Psoas muscle (tissue), 8 donors: ENCODE measurements at regions of chr1 and their contacts with region 1.

Region 1: GRCh38 chr1:20775700-20776099 is 11.4 kb downstream of the HP1BP3 start:
- DNase-seq: no peak
- ATAC-seq: no peak
- H3K4me3 ChIP-seq: no peak overlapping the region
- H3K27ac ChIP-seq: no peak overlapping the region
- H3K4me1 ChIP-seq: peaks cover 19% of the 10 kb centered on the region
- H3K27me3 ChIP-seq: no peaks in the 10 kb centered on the region
- CTCF ChIP-seq: no peak

Region 2: GRCh38 chr1:20660847-20661206 is 114.9 kb before region 1 on chr1:
- intact Hi-C with region 1: no loop called
- DNase-seq: peak in 1 of 2 donors; percentile 52
- ATAC-seq: no peak
- H3K4me3 ChIP-seq: peak overlapping the region; percentile 92
- H3K27ac ChIP-seq: peak overlapping the region; percentile 93
- H3K4me1 ChIP-seq: peaks cover 30% of the 10 kb centered on the region
- H3K27me3 ChIP-seq: no peaks in the 10 kb centered on the region
- CTCF ChIP-seq: no peak

Region 3: GRCh38 chr1:20742671-20743070 is 33.0 kb before region 1 on chr1:
- intact Hi-C with region 1: loop called in 1 of 2 experiments (anchors 5 kb)
- DNase-seq: no peak
- ATAC-seq: no peak
- H3K4me3 ChIP-seq: no peak overlapping the region
- H3K27ac ChIP-seq: no peak overlapping the region
- H3K4me1 ChIP-seq: peaks cover 6% of the 10 kb centered on the region
- H3K27me3 ChIP-seq: no peaks in the 10 kb centered on the region
- CTCF ChIP-seq: no peak